ENCODE measurements at regions of chr19 and their contacts with region 1.

Region 1: DNA sequence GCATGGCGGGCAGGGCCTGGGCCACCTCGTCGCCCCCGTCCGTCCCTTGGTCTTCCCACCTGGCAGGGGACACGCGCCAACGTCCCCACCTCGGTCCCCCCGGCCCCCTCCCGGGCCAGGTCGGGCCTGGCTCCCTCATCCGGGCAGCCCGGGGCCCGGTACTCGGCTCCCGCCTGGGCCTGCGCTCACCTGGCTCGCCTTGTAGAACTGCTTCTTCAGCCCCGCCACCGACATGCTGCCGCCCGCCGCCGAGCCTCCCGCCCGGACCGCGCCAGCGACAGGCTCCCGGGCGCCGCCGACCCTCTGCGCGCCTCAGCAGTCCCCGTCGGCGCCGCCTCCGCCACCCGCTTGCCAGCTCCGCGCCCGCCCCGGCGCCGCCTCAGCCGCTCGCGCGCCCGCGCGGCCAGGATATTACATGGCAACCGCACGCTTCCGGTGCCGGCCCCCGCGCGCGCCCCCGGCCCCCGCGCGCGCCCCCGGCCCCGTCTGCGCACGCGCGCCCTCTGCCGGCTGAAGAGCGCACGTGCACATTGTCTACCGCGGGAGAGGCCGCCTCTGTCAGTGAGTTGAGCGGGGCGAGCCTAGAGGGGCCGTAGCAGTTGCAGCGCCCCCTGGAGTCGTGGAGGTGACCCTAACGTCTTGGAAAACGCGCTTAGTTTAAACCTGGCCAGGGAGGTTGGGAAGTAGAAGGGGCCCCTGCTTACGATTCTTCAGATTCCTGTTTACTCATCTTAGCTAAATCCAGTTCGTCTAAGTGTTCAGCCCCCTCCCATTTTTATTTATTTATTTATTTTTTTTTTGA is at the start of gene SH3GL1:
- DNase-seq: peak; percentile 95
- ATAC-seq: peak; percentile 74
- total RNA-seq, gene SH3GL1: 18.6 TPM

Region 2: GRCh38 chr19:4267101-4267900 is 133.0 kb before region 1 on chr19:
- intact Hi-C with region 1: loop called (anchors 10 kb)
- DNase-seq: peak; percentile 72
- ATAC-seq: peak; percentile 80